ENCODE measurements at regions of chr11 and their contacts with region 1.

Region 1: GRCh38 chr11:69071086-69071800 is 22.5 kb downstream of the TPCN2 start:
- DNase-seq: no peak
- ATAC-seq: no peak
- H3K4me3 ChIP-seq: no peak overlapping the region
- H3K27ac ChIP-seq: no peak overlapping the region
- H3K4me1 ChIP-seq: no peaks in the 10 kb centered on the region
- H3K27me3 ChIP-seq: no peaks in the 10 kb centered on the region
- CTCF ChIP-seq: no peak

Region 2: GRCh38 chr11:68950268-68950667 is 121.0 kb before region 1 on chr11:
- CTCF ChIA-PET with region 1: no interaction called
- POLR2A ChIA-PET with region 1: interaction called, 11 read pairs
- in situ Hi-C with region 1: no loop called
- intact Hi-C with region 1: no loop called
- DNase-seq: no peak
- ATAC-seq: peak; percentile 72; the same call in 1 of the 2 replicates
- H3K4me3 ChIP-seq: no peak overlapping the region
- H3K27ac ChIP-seq: no peak overlapping the region
- H3K4me1 ChIP-seq: 0 out of 2 replicates have a peak, but pooled peaks cover under 1% of the 10 kb centered on the region
- H3K27me3 ChIP-seq: no peaks in the 10 kb centered on the region
- CTCF ChIP-seq: no peak

Measured in Panc1 (cell line).